Activated CD4-positive, alpha-beta T cell treated with anti-CD3 and anti-CD28 coated beads for 36 hours (primary cell): ENCODE measurements at regions of chr10 and their contacts with region 1.

Region 1: DNA sequence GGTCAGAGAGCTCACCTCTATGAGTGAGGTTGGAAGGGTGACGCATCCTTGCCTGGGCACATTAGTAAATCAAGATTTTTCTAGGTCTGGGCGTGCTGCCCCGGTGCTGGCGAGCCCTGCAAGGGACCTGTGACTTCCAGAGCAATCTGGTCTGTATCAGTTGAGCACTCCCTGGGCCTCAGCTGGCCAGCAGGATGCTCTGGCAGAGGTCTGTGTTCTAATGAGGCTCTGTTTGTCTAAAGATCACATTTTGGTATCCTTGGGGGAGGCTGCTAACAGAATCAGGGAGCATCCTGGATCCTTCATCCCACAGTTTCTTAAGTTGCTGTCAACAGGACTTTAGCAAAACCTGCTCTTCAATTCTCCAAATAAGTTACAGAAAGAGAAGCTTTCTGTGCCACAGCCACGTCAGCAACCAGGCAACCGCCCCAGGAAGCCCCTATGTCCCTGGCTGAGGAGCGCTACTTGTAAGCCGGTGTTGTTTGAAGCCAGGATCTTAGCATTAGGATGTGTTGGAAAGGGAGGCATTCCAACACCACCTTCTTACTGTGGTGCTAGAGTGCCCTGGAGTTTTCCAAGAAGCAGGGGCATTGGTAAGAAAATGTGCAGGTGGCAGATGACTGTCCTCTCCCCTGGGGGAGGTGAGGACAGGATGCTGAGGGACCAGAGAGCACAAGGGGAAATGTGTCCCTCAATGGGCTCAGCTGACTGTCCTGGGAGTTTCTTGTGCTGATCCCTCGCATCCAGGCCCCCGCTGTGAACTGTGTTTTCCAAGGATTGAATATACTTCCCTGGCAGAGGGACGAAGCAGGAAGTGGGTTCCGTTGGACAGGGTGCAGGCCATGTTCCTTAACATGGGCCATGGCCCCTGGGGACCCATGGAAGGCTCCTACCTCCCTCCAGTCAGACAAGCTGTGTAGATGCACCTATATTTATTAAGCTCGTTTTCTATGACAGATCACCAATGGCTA is 139.8 kb upstream of the GDF10 start:
- DNase-seq: no peak
- ATAC-seq: no peak
- H3K4me3 Mint-ChIP-seq: no peak overlapping the region
- H3K27ac Mint-ChIP-seq: no peak overlapping the region
- H3K4me1 Mint-ChIP-seq: peaks cover 18% of the 10 kb centered on the region
- H3K27me3 Mint-ChIP-seq: peaks cover 2% of the 10 kb centered on the region

Region 2: DNA sequence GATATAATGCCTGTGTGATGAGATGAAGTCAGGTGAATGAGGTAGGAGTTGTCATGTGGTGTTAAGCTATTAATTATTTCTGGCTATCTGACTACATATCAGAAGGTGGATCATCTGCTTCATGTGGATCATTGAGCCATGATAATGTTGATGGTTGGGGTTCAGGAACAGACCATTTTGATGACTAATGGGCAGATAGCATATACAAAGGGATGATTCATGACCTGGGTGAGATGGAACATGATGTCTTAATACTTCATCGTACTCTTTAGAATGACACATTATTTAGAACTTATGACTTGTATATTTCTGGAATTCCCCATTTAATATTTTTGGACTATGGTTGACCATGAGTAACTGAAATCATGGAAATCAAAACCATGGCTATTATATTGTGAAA is 2000.0 kb before region 1 on chr10:
- CTCF ChIA-PET with region 1: no interaction called
- POLR2A ChIA-PET with region 1: no interaction called
- intact Hi-C with region 1: no loop called
- DNase-seq: no peak
- ATAC-seq: no peak
- H3K4me3 Mint-ChIP-seq: no peak overlapping the region
- H3K27ac Mint-ChIP-seq: no peak overlapping the region
- H3K4me1 Mint-ChIP-seq: no peaks in the 10 kb centered on the region
- H3K27me3 Mint-ChIP-seq: peaks cover 6% of the 10 kb centered on the region

Region 3: DNA sequence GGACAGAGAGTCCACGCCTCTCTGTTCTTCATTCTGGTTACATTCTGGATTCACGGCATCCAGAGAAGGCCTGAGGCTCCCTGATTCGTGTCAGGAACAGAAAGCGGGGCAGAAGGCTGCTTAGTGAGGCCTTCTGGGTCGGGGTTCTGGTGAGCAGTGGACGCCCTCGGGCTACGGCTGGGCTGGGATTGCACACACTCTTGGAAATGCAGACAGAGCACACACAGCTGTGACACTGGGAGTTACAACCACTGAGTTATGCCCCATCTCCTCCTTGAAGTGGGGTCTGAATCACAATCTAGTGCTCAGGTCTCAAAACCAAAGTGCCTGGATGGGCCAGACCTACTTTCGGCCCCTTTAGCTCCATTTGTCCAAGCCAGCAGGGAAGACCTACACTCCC is 17.2 kb before region 1 on chr10:
- CTCF ChIA-PET with region 1: no interaction called
- POLR2A ChIA-PET with region 1: no interaction called
- intact Hi-C with region 1: loop called in 1 of 2 experiments (anchors 2 kb)
- DNase-seq: no peak
- ATAC-seq: no peak
- H3K4me3 Mint-ChIP-seq: no peak overlapping the region
- H3K27ac Mint-ChIP-seq: no peak overlapping the region
- H3K4me1 Mint-ChIP-seq: peaks cover 7% of the 10 kb centered on the region
- H3K27me3 Mint-ChIP-seq: no peaks in the 10 kb centered on the region

Region 4: DNA sequence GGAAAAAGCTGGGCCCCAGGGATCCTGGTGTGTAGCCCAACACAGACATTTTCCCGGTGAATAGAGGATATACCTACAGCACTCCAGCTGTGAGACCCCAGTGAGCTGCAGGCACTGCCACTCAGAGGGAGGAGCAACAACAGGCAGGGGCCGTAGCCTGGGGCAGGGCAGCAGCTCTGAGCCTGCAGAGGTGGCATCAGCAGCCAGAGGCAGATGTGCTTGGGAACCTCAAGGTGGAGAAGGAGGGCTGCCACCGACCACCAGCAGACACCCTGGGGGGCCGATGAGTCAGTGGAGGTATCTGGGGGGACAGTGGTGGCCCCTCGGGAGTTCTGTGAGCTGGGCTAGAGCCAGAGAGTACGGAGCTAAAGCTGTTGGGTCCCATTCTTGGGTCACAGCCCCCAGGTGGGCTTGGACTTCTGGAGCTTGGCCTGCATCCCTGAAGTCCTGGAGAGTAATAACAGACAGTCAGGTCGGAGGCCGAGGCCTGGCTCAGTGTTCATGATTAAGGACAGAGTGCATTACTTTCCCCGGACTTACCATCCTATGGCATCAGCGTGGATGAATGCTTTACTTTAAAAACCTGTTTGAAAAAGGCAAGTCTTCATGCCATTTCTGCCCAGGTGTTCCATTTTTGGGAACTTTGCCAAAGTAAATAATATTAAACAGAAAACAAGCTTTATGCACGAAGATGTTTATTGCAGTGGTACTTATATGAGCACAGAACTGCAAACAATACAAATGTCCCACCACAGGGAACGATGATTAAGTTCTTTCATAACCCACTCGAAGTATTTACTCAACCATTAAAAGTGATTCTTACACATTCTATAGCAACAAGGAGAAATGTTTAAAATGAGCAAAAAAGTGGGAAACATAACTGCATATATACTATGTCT is 29.8 kb after region 1 on chr10:
- CTCF ChIA-PET with region 1: no interaction called
- POLR2A ChIA-PET with region 1: no interaction called
- intact Hi-C with region 1: no loop called
- DNase-seq: no peak
- ATAC-seq: no peak
- H3K4me3 Mint-ChIP-seq: no peak overlapping the region
- H3K27ac Mint-ChIP-seq: no peak overlapping the region
- H3K4me1 Mint-ChIP-seq: peaks cover 5% of the 10 kb centered on the region
- H3K27me3 Mint-ChIP-seq: no peaks in the 10 kb centered on the region